Activated CD4-positive, alpha-beta T cell treated with anti-CD3 and anti-CD28 coated beads, Interleukin-2, amount 10 ng/mL, durations not matched to agents 24 days and 14 days (primary cell): ENCODE measurements at regions of chr4 and their contacts with region 1.

Region 1: DNA sequence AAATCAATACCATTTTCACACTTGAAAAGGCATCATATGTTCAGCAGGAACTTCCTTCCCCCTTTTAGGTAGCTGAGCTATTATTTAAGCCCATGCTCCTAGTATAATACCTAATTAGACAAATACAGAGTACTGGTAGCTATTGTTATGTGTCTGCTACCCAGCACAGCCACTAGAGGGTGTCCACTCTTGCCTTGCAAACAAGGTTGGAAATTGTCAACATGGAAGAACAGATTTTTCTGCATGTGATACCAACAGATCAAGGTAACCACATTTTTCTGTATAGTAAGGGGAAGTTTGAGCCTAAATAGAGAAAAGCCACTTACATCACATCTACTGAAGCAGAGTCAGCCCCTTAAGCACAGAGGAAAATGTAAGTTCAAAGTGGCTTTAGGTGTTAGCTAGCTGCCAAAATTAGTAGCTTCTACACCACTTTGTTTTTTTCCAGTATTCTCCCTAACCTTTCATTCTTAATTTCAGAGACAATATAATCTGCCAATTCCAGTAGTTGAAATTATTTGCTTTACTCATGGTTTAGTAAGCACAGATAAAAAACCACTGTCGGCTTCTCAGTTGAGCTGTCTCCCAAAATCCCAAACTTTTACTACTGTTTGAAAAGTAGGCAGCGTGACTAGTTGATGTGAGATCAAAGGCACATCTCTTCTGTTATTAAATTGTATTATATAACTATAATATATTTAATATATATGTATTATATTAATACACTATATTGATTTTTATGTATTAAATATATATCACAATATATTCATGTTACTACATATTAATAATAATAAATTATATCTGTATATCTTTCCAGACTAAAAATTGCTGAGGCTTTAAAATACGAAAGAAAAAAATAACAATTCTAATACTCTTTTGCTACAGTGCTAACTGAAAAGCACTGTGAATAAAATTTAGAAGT is 38.2 kb downstream of the EDNRA start:
- DNase-seq: peak; percentile 82
- H3K4me3 Mint-ChIP-seq: no peak overlapping the region
- H3K27ac Mint-ChIP-seq: no peak overlapping the region
- H3K4me1 Mint-ChIP-seq: no peaks in the 10 kb centered on the region
- H3K27me3 Mint-ChIP-seq: peaks cover 8% of the 10 kb centered on the region

Region 2: DNA sequence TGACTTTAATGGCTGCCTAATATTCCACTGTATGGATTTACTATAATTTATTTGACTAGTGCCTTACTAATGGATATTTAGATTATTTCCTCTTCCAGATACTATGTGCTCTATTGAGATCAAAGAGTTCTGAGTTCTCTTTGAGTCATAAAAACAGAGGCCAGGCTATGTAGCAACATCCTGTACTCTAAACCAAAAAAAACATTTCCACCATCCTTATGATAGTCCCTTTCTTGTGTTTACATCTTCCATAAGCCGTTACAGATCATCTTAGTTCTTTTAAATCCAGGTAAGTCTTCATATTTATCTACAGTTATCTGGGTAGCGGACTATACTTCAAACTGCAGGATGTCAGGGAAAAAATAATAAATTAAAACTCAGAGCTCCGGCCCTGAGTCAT is 41.5 kb after region 1 on chr4:
- intact Hi-C with region 1: no loop called
- DNase-seq: no peak
- H3K4me3 Mint-ChIP-seq: no peak overlapping the region
- H3K27ac Mint-ChIP-seq: no peak overlapping the region
- H3K4me1 Mint-ChIP-seq: no peaks in the 10 kb centered on the region
- H3K27me3 Mint-ChIP-seq: peaks cover 2% of the 10 kb centered on the region

Region 3: GRCh38 chr4:147590249-147590920 is 71.3 kb after region 1 on chr4:
- intact Hi-C with region 1: loop called (anchors 1 kb)
- DNase-seq: peak; percentile 79
- H3K4me3 Mint-ChIP-seq: no peak overlapping the region
- H3K27ac Mint-ChIP-seq: no peak overlapping the region
- H3K4me1 Mint-ChIP-seq: no peaks in the 10 kb centered on the region
- H3K27me3 Mint-ChIP-seq: peaks cover 9% of the 10 kb centered on the region

Region 4: DNA sequence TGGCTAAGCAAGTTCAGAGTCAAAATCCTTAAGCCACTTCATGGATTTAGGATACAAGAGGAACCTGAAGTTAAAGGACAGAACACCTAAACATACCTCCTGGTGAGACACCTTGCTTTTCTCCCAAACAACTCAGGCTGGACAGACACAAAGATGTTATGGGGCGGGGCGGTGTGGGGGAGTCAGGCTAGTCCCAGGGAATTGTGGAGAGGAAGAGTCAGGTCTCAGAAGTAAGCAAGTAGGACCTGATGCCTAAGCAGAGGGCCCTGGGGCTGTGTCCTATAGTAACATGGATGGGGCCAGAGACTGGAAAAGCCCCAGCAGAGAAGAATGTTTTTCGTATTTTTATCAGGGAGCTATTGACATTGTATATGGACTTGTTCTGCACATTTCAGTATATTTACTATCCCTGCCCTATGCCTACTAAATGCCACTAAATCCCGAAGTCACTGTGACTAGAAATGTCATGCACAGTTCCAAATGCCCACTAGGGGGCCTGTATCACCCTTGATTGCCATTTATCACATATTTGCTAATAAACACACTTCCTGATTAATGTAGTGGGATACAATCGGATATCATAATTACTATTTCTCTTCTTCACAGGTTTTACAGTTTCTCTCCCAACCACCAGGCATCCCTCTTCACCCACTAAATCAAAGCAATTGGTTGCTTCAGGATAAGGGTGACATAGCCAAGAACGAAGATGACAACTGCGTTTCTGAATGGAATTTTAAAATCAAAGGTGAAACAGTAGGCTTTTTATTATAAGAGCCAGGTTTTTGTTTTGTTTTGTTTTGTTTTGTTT is 189.0 kb after region 1 on chr4:
- intact Hi-C with region 1: loop called (anchors 2 kb)
- DNase-seq: peak; percentile 81
- H3K4me3 Mint-ChIP-seq: no peak overlapping the region
- H3K27ac Mint-ChIP-seq: no peak overlapping the region
- H3K4me1 Mint-ChIP-seq: peaks cover 3% of the 10 kb centered on the region
- H3K27me3 Mint-ChIP-seq: peaks cover 10% of the 10 kb centered on the region